Posterior vena cava (tissue), 2 donors: ENCODE measurements at regions of chr20 and their contacts with region 1.

Region 1: DNA sequence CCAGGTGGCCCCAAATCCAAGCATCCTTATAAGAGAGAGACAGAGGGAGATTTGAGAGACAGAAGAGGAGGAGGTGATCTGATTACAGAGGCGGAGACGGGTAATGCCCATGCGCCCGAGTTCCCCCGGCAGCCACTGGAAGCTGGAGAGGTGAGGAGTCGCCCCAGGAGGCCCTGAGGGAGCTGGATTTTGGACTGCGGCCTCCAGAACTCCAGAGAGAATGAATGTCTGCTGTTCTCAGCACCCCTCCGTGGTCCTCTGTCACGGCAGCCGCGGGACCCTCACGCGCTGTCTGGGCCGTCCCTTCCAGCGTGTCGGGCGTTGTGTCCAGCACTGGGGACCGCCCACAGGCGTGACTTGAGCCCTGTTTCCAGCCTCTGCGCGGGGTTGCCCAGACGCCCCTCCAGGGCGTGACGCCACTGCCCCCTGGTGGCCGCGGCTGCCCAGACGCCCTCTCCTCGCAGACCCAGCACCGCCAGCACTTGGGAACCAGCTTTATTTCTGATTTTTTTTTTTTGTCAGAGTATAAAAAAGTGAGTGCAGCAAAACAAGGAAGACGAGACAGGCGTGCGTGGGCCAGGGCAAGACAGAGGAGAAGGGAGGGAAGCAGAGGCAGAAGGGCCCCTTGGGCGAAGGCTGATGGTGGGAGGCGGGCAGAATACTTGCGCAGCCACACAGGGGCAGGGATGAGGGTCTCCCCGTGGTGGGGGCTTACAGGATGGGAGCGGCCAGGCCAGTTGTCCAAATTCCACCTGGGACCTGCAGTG is 4.1 kb upstream of the ZNF512B start:
- DNase-seq: peak; percentile 96

Region 2: GRCh38 chr20:63537525-63538203 is 436.2 kb before region 1 on chr20:
- intact Hi-C with region 1: loop called in 1 of 2 experiments (anchors 5 kb)
- DNase-seq: peak; percentile 96

Region 3: GRCh38 chr20:63791497-63792156 is 182.2 kb before region 1 on chr20:
- intact Hi-C with region 1: loop called in 1 of 2 experiments (anchors 10 kb)
- DNase-seq: no peak

Region 4: DNA sequence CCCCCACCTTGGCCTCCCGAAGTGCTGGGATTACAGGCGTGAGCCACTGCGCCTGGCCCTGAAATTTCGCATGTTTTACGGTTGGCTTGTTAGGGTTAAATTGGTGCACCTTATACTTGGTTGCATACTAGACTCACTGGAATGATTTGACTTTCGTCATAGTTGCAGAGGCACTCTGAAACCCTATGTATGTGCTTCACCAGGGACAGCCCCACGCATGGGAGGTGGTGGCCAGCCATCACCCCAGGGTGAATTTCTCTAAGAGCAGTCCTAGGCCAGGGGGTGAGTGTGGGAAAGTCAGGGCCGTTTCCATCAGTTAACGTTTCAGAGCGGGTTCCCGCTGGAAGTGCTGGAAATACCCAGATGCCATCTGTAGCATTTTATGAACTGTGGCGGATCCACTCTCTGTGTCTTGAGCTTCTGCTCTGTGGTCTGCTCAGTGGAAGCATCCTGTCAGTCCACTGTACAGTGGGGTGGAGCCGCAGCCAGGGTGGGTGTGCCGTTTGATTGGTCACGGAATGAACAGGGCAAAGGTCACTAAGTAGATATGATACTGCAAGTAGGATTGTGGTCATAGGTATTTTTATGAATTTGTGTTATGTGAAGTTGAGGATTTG is 65.7 kb before region 1 on chr20:
- intact Hi-C with region 1: loop called (anchors 5 to 10 kb)
- DNase-seq: no peak